B cell (primary cell): ENCODE measurements at regions of chr5 and their contacts with region 1.

Region 1: DNA sequence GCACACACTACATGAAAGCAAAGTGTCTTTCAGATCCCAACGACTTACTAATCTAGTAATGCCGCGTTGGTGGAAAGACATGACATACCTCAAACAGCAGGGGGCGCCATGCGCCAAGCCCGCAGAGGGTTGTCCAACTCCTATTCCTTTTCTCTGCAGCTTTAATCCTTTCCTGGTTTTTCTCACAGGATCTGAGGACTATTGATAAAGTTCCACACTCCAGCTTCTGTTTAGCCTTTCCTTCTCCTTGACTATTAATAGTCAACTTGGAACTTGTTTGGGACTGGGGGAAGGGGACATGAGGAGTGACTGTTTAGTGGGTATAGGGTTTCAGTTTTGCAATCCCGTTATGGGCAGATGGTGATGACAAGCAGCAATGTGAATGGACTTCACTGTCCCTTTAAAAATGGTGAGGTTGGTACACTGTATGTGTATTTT is 62.9 kb downstream of the OTULIN start:
- DNase-seq: peak; percentile 77
- ATAC-seq: peak; percentile 65
- H3K4me3 ChIP-seq: no peak overlapping the region
- H3K4me3 Mint-ChIP-seq: no peak overlapping the region
- H3K27ac ChIP-seq: no peak overlapping the region
- H3K27ac Mint-ChIP-seq: no peak overlapping the region
- H3K4me1 ChIP-seq: peaks cover 0 to 12% of the 10 kb centered on the region in 2 donors
- H3K4me1 Mint-ChIP-seq: peaks cover 18% of the 10 kb centered on the region
- H3K27me3 ChIP-seq: no peaks in the 10 kb centered on the region
- H3K27me3 Mint-ChIP-seq: no peaks in the 10 kb centered on the region
- CTCF ChIP-seq: peak; percentile 99

Region 2: DNA sequence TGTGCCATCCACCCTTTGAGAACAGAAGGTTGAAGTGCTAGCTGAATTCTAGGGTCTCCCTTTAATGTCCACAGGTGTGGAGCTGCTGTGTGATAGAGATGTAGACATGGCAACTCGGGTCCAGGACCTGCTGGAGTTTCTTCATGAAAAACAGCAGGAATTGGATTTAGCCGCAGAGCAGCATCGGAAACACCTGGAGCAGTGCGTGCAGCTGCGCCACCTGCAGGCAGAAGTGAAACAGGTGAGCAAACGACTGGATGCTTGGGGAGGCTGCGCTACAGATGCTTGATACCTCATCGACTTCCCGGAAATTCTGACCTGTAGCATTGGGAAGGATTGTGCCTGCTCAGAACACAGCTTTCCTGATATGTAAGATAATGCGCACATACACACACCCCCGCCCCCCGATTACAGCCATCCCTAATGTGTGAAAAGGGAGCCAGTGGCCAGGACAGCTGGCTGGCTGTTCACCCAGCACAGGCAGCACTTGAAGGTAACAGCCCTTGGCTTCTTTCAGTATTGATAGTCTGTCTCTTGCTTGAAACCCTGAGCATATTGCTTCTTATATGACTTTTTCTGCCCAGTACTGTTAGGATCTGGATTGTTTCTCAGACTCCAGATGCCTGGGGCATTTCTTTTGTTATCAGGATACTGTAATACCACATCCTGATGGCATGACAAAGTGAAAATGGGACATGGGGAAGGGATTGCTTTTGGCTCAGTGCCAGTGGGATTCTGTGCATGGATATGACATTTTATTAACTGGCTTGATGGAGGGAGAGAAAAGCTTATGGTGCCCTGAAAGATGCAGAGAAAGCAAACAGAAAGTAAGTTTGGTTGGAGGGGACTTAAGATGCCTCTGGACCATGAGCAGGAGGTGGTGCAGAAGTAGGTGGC is 362.6 kb before region 1 on chr5:
- CTCF ChIA-PET with region 1: no interaction called
- POLR2A ChIA-PET with region 1: no interaction called
- intact Hi-C with region 1: no loop called
- DNase-seq: no peak
- ATAC-seq: no peak
- H3K4me3 ChIP-seq: no peak overlapping the region
- H3K4me3 Mint-ChIP-seq: no peak overlapping the region
- H3K27ac ChIP-seq: no peak overlapping the region
- H3K27ac Mint-ChIP-seq: no peak overlapping the region
- H3K4me1 ChIP-seq: peaks cover 10 to 13% of the 10 kb centered on the region in 2 donors
- H3K4me1 Mint-ChIP-seq: peaks cover 12% of the 10 kb centered on the region
- H3K27me3 ChIP-seq: no peaks in the 10 kb centered on the region
- H3K27me3 Mint-ChIP-seq: no peaks in the 10 kb centered on the region
- CTCF ChIP-seq: peak; percentile 71

Region 3: DNA sequence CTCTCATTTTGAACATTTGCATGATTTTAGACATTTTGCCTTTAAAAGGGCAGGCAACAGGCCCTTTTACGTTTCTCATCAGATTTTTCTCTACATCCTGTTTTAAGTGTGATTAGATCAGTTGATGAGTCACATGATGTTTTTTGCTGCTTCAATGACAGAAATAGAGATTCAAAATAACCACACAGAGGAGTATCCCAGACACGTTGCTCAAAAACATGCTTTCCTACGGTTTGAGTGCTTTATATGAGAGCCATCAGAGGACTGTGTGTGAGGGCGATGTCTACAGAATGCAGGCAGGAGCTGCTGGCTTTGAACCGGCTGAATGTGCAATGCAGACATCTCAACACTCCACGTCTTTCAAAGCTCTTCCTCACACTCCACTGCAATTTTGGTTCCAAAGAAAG is 20.8 kb before region 1 on chr5:
- CTCF ChIA-PET with region 1: interaction called, 24 read pairs
- POLR2A ChIA-PET with region 1: no interaction called
- intact Hi-C with region 1: no loop called
- DNase-seq: peak; percentile 47
- ATAC-seq: peak; percentile 66
- H3K4me3 ChIP-seq: no peak overlapping the region
- H3K4me3 Mint-ChIP-seq: peak overlapping the region; percentile 43
- H3K27ac ChIP-seq: peak overlapping the region; percentile 42 to 75
- H3K27ac Mint-ChIP-seq: peak overlapping the region; percentile 86
- H3K4me1 ChIP-seq: peaks cover 15 to 16% of the 10 kb centered on the region in 2 donors
- H3K4me1 Mint-ChIP-seq: peaks cover 27% of the 10 kb centered on the region
- H3K27me3 ChIP-seq: no peaks in the 10 kb centered on the region
- H3K27me3 Mint-ChIP-seq: no peaks in the 10 kb centered on the region
- CTCF ChIP-seq: no peak

Region 4: DNA sequence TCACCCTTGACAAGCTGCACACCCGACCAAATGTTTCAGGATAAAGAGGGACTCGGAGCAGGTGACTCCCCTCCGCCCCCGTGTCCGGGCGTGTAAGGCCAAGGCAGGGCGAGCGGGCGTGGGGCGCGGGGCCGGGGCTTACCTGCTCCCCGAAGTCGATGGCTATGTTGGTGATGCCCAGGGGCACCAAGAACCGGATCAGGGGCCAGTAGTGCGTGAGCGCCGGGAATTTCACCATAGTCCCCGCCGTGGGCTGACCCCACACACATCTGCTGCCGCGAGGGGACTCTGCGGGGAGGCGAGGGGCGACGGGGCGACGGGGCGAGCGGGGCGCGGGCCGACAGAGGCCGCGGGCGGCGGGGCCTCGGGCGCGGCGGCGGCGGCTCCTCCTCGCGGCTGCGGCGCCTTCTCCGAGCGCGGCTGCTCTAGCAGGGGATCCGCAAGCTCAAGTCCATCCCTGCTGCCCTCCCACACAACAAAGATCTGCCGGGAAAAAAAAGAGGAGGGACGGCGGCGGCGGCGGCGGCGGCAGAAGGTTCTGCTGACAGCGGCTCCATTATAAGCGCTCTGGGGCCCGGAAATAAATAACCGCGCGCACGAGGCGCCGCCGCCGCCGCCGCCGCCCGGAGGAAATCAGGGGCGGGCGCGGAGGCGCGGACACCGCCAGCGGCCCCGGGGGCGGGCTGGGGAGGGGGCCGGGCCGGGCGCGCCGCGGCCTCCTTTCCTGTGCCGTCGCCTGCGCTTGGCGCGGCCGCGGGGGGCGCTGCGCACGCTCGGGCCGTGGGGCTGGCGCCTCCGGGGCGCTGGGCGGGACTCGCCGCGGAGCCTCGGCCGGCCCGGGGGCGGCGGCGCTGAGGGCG is 144.0 kb after region 1 on chr5 and contains the start of gene ANKH:
- CTCF ChIA-PET with region 1: interaction called, 53 read pairs
- POLR2A ChIA-PET with region 1: no interaction called
- intact Hi-C with region 1: loop called (anchors 1 kb)
- DNase-seq: peak; percentile 90
- ATAC-seq: peak; percentile 87
- H3K4me3 ChIP-seq: peak within 1 kb of the TSS; percentile 7 to 86 (median 64)
- H3K4me3 Mint-ChIP-seq: peak within 1 kb of the TSS; percentile 94
- H3K27ac ChIP-seq: peak within 1 kb of the TSS; percentile 24 to 74
- H3K27ac Mint-ChIP-seq: peak within 1 kb of the TSS; percentile 88
- H3K4me1 ChIP-seq: peaks cover 13 to 22% of the 10 kb centered on the region in 2 donors
- H3K4me1 Mint-ChIP-seq: peaks cover 25% of the 10 kb centered on the region
- H3K27me3 ChIP-seq: peaks cover 0 to 3% (median 0%) of the 10 kb centered on the region in 4 experiments
- H3K27me3 Mint-ChIP-seq: peaks cover 9% of the 10 kb centered on the region
- CTCF ChIP-seq: no peak
- total RNA-seq, gene ANKH: 71.1 and 71.3 TPM in 2 replicates

Region 5: DNA sequence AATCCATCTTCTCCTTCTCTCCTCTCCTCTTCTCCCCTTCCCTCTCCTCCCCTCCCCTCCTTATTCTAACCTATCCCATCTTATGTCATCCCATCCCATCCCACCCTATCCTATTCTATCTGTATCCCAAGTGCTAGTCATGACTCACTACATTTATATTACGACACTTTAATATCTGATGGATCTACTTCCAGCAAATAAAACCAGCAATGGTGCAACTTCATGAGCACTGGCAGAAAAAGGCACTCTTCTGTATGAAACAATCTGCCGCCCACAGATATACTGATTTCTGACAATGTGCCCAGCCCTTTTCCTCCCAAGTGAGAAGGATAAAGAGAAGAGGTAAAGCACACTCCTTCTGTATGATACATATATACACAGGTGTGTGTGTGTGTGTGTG is 230.7 kb after region 1 on chr5:
- CTCF ChIA-PET with region 1: interaction called, 46 read pairs
- POLR2A ChIA-PET with region 1: no interaction called
- intact Hi-C with region 1: no loop called
- DNase-seq: no peak
- ATAC-seq: no peak
- H3K4me3 ChIP-seq: no peak overlapping the region
- H3K4me3 Mint-ChIP-seq: no peak overlapping the region
- H3K27ac ChIP-seq: no peak overlapping the region
- H3K27ac Mint-ChIP-seq: no peak overlapping the region
- H3K4me1 ChIP-seq: no peaks in the 10 kb centered on the region
- H3K4me1 Mint-ChIP-seq: no peaks in the 10 kb centered on the region
- H3K27me3 ChIP-seq: no peaks in the 10 kb centered on the region
- H3K27me3 Mint-ChIP-seq: peaks cover 5% of the 10 kb centered on the region
- CTCF ChIP-seq: no peak

Region 6: DNA sequence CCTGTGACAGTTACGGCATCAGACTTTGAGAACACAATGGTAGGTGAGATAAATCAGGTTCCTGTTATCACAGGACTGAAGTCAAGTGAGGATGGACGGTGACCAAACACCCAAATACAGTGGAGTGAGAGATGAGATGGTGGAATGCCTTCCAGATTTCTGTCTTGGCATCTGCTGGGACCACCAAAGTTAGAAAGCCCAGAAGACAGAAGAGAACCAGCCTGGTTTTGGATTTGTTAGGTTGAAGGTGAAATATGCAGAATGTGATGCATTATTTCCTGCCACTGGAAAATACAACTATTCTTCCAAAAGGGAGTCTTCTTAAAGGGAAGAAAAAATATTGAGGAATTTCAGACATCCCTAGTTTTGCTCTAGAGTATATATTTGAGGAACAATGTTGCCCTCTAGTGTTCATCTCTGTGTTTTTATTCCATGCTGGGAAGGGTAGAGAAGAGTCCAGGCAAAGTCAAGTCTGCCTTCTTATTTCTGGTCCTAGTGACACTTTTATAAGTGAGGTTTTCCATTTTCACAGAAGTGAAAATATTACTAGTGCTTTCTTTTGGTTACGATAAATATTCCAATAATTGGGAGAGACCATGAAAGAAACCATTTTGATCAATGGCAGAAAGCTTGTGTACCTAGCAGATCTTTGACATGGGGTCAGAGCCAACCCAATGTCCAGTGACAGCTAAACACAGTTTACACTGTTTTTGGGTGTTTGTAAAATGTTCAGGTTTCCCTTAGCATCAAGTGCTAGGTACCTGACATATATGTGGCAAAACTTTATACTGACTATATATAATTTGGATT is 286.4 kb after region 1 on chr5:
- CTCF ChIA-PET with region 1: interaction called, 30 read pairs
- POLR2A ChIA-PET with region 1: no interaction called
- intact Hi-C with region 1: loop called (anchors 1 kb)
- DNase-seq: peak; percentile 59
- ATAC-seq: peak; percentile 57
- H3K4me3 ChIP-seq: no peak overlapping the region
- H3K4me3 Mint-ChIP-seq: no peak overlapping the region
- H3K27ac ChIP-seq: no peak overlapping the region
- H3K27ac Mint-ChIP-seq: no peak overlapping the region
- H3K4me1 ChIP-seq: no peaks in the 10 kb centered on the region
- H3K4me1 Mint-ChIP-seq: no peaks in the 10 kb centered on the region
- H3K27me3 ChIP-seq: peaks cover 0 to 3% (median 0%) of the 10 kb centered on the region in 4 experiments
- H3K27me3 Mint-ChIP-seq: peaks cover 9% of the 10 kb centered on the region
- CTCF ChIP-seq: peak; percentile 76